ENCODE measurements at regions of chr1 and their contacts with region 1.

Region 1: GRCh38 chr1:94532077-94532476 is 9.5 kb downstream of the F3 start:
- DNase-seq: no peak
- ATAC-seq: peak in 1 of 2 donors; percentile 25

Region 2: DNA sequence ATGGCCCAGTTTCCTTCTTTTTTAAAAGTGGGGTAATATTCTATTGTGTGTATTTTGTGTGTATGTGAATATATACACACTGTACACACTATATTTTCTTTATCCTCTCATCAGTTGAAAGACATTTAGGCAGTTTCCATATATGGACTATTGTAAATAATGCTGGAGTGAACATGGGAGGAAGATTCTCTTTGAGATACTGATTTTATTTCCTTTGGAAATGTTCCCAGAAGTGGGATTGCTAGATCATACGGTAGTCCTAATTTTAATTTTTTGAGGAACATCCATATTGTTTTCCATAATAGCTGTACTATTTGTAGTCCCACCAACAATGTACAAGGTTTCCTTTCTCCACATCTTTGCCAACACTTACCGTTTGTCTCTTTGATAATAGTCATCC is 41.5 kb before region 1 on chr1:
- intact Hi-C with region 1: no loop called
- DNase-seq: no peak
- ATAC-seq: no peak

Region 3: GRCh38 chr1:94654031-94654430 is 122.0 kb after region 1 on chr1:
- intact Hi-C with region 1: loop called (anchors 5 to 10 kb)
- DNase-seq: no peak
- ATAC-seq: peak; percentile 31 to 34